HepG2 (cell line): ENCODE measurements at regions of chr14 and their contacts with region 1.

Region 1: GRCh38 chr14:24481622-24482324 is 26.3 kb downstream of the CMA1 start:
- DNase-seq: peak; percentile 97
- ATAC-seq: peak; percentile 100
- H3K4me3 ChIP-seq: peak overlapping the region in 2 of 3 experiments; percentile 40 to 65; a peak in 4 of 6 replicates
- H3K27ac ChIP-seq: no peak overlapping the region
- H3K4me1 ChIP-seq: peaks cover 11% of the 10 kb centered on the region
- H3K27me3 ChIP-seq: no peaks in the 10 kb centered on the region
- CTCF ChIP-seq: peak; percentile 100
- EP300 ChIP-seq: peak in 1 of 2 experiments; percentile 36; a peak in 1 of 4 replicates
- POLR2A ChIP-seq: peak; percentile 42 to 71; a peak in 2 of 4 replicates
- RAD21 ChIP-seq: peak; percentile 96

Region 2: DNA sequence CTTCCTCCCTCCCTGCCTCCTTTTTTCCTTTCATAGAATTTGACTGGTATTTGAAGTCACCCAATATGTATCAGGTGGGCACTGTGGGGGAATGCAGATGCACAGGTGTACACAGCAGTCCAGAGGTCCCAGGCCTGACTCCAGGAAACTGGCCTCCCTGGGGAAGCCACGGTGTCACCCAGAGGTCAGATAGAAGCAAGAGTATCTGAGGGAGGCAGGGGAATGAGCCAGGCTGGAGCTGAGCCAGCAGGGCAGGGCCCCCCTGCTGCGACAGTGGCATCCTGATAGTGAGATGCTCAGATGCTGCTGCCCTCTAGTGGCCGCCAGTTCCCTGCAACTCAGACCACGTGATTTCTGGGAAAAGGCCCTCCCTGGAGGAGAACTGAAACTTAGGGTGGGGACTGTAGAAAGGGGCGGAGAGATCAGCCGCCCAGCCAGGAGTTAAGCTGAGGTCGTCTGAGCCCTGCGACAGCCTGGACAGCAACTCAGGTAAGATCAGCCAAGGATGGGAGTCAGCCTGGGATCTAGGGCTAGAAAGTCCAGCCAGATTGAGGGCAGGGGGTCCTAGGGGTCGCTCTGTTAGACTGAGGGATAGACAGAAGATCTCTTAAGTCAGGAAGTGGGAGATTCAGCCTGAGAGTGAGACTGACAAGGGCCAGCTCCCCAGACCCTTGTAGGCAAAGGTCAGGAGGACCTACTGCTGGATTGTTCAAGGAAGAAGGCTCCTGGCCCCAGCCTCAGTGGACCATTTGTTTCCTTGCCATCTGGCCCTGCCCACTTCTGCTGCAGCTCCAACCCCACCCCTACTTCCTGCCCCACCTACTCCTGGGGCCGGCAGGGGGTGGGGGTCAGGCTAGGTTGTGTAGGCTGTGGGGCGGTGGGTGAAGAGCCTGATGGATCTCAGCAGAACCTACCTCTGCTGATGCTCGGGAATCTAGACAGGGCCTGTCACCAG is 320.6 kb before region 1 on chr14 and contains the start of gene IRF9:
- CTCF ChIA-PET with region 1: no interaction called
- POLR2A ChIA-PET with region 1: no interaction called
- in situ Hi-C with region 1: no loop called
- intact Hi-C with region 1: no loop called
- DNase-seq: peak; percentile 99
- ATAC-seq: peak; percentile 92
- H3K4me3 ChIP-seq: peak within 1 kb of the TSS; percentile 50 to 78 (median 64)
- H3K27ac ChIP-seq: peak within 1 kb of the TSS; percentile 62
- H3K4me1 ChIP-seq: peaks cover 28% of the 10 kb centered on the region
- H3K27me3 ChIP-seq: no peaks in the 10 kb centered on the region; a peak in 1 of 5 replicates
- CTCF ChIP-seq: peak; percentile 100
- EP300 ChIP-seq: peak; percentile 55 to 85; a peak in 3 of 4 replicates
- POLR2A ChIP-seq: peak in 1 of 2 experiments; percentile 66; a peak in 2 of 4 replicates
- RAD21 ChIP-seq: peak; percentile 99
- total RNA-seq, gene IRF9: 13.8 and 14.9 TPM in 2 replicates

Region 3: DNA sequence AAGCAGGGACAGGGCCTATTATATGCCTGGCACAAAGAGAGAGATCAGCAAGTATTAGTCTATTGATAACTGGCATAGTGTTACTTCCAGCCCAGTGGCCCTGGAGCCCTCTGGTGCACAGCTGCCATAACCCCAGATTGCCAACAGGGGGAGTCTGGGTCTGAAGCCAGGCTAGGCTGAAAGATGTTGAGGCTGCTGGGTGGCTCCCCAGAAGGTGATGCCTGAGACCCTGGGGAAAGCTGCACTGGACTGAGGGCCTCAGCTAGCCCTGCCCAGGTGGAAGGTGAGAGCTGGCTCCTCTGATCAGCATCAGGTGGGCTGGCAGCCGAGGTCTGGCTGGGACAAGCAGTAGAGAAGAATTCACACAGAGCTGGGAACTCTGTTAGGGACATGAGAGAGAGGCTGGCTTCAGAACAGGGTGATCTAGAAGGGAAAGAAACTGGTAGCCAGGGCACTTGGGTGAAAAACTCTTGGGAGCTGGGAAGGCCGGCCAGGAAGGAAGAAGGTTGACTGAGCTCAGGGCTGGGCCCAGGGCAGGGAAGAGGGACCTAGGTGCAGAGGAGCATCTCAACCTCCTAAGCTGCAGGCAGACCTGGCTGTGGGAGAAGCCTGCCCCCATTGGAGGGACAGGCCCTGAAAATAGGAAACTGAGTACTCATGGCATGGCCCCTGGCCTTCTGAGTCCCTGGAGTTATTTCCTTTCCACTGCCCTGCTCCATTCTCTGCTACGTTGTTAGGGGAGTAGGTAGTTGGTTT is 123.8 kb after region 1 on chr14:
- CTCF ChIA-PET with region 1: interaction called, 4 read pairs
- POLR2A ChIA-PET with region 1: no interaction called
- in situ Hi-C with region 1: no loop called
- intact Hi-C with region 1: loop called (anchors 1 kb)
- DNase-seq: peak; percentile 54
- ATAC-seq: peak; percentile 93
- H3K4me3 ChIP-seq: no peak overlapping the region
- H3K27ac ChIP-seq: no peak overlapping the region
- H3K4me1 ChIP-seq: peaks cover 7% of the 10 kb centered on the region; the same call in 1 of the 2 replicates
- H3K27me3 ChIP-seq: no peaks in the 10 kb centered on the region; a peak in 1 of 5 replicates
- CTCF ChIP-seq: peak; percentile 88
- EP300 ChIP-seq: no peak
- POLR2A ChIP-seq: no peak
- RAD21 ChIP-seq: no peak; the same call in 1 of the 2 replicates

Region 4: DNA sequence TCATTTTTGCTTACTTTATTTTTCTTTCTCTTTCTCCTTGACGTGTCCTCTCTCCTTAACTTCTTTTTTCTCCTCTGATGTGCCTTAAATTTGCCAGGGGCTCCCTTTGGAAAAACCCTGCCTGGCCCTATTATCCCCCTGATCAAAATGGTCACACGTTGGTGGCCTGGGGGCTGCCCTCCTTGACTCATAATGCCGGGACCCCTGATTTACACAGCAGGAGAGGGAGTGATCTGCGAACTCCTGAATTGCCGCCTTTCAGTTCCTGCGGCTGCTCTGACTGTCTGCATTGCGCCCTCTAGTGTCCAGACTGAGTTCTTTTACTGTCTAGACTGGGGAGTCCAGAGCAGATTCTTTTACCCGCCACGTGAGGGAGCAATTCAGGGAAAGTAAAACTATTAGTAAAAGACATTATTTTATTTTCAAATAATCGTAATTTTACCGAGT is 197.1 kb after region 1 on chr14:
- CTCF ChIA-PET with region 1: interaction called, 40 read pairs
- POLR2A ChIA-PET with region 1: no interaction called
- in situ Hi-C with region 1: loop called (anchors 5 kb)
- intact Hi-C with region 1: loop called (anchors 1 kb)
- DNase-seq: peak; percentile 98
- ATAC-seq: peak; percentile 100
- H3K4me3 ChIP-seq: peak overlapping the region; percentile 2 to 55 (median 36)
- H3K27ac ChIP-seq: no peak overlapping the region
- H3K4me1 ChIP-seq: peaks cover 6% of the 10 kb centered on the region
- H3K27me3 ChIP-seq: peaks cover 0 to 9% of the 10 kb centered on the region in 2 experiments
- CTCF ChIP-seq: peak; percentile 99
- EP300 ChIP-seq: no peak
- POLR2A ChIP-seq: no peak
- RAD21 ChIP-seq: no peak; the same call in 1 of the 2 replicates